B cell (primary cell): ENCODE measurements at regions of chr12 and their contacts with region 1.

Region 1: GRCh38 chr12:27048822-27049752 is 26.7 kb downstream of the MED21 start:
- DNase-seq: no peak
- ATAC-seq: no peak
- H3K4me3 ChIP-seq: no peak overlapping the region
- H3K4me3 Mint-ChIP-seq: no peak overlapping the region
- H3K27ac ChIP-seq: no peak overlapping the region
- H3K27ac Mint-ChIP-seq: no peak overlapping the region
- H3K4me1 ChIP-seq: no peaks in the 10 kb centered on the region
- H3K4me1 Mint-ChIP-seq: no peaks in the 10 kb centered on the region
- H3K27me3 ChIP-seq: no peaks in the 10 kb centered on the region
- H3K27me3 Mint-ChIP-seq: no peaks in the 10 kb centered on the region
- CTCF ChIP-seq: no peak

Region 2: DNA sequence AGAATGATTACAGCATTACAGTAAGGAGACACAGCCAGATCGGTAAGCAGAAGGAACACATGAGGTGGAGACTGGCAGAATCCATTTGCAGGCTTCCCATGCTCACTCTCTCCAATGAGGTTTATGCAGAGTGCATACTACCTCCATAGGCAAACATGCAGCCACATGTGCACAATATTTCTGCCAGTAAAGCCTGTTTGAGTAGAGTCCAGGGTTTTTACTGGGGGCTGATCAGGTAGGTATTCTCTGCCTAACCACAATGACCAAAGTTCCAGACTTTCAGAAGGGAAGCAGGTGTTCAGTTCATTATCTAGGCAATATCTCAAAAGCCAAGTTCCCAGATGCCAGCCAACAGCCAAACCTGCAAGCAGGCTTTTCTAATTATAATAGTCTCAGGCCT is 142.4 kb before region 1 on chr12:
- CTCF ChIA-PET with region 1: no interaction called
- POLR2A ChIA-PET with region 1: no interaction called
- intact Hi-C with region 1: no loop called
- DNase-seq: no peak
- ATAC-seq: no peak
- H3K4me3 ChIP-seq: no peak overlapping the region
- H3K4me3 Mint-ChIP-seq: no peak overlapping the region
- H3K27ac ChIP-seq: peak overlapping the region in 1 of 2 donors; percentile 5
- H3K27ac Mint-ChIP-seq: no peak overlapping the region
- H3K4me1 ChIP-seq: no peaks in the 10 kb centered on the region
- H3K4me1 Mint-ChIP-seq: peaks cover 3% of the 10 kb centered on the region
- H3K27me3 ChIP-seq: no peaks in the 10 kb centered on the region
- H3K27me3 Mint-ChIP-seq: no peaks in the 10 kb centered on the region
- CTCF ChIP-seq: no peak

Region 3: GRCh38 chr12:28350502-28350901 is 1301.4 kb after region 1 on chr12:
- CTCF ChIA-PET with region 1: no interaction called
- POLR2A ChIA-PET with region 1: no interaction called
- intact Hi-C with region 1: loop called (anchors 10 kb)
- DNase-seq: no peak
- ATAC-seq: no peak
- H3K4me3 ChIP-seq: no peak overlapping the region
- H3K4me3 Mint-ChIP-seq: no peak overlapping the region
- H3K27ac ChIP-seq: no peak overlapping the region
- H3K27ac Mint-ChIP-seq: no peak overlapping the region
- H3K4me1 ChIP-seq: no peaks in the 10 kb centered on the region
- H3K4me1 Mint-ChIP-seq: peaks cover 4% of the 10 kb centered on the region
- H3K27me3 ChIP-seq: no peaks in the 10 kb centered on the region
- H3K27me3 Mint-ChIP-seq: no peaks in the 10 kb centered on the region
- CTCF ChIP-seq: no peak